Natural killer cell (primary cell): ENCODE measurements at regions of chr14 and their contacts with region 1.

Region 1: GRCh38 chr14:20690848-20691523 is 2.4 kb downstream of the ANG start:
- DNase-seq: peak in 1 of 2 donors; percentile 87
- ATAC-seq: peak; percentile 91 to 100 (median 98)
- H3K4me3 ChIP-seq: no peak overlapping the region
- H3K4me3 Mint-ChIP-seq: no peak overlapping the region
- H3K27ac ChIP-seq: no peak overlapping the region
- H3K27ac Mint-ChIP-seq: no peak overlapping the region
- H3K4me1 ChIP-seq: no peaks in the 10 kb centered on the region
- H3K4me1 Mint-ChIP-seq: peaks cover 6% of the 10 kb centered on the region in 2 donors
- H3K27me3 ChIP-seq: no peaks in the 10 kb centered on the region
- H3K27me3 Mint-ChIP-seq: no peaks in the 10 kb centered on the region
- CTCF ChIP-seq: peak; percentile 83

Region 2: DNA sequence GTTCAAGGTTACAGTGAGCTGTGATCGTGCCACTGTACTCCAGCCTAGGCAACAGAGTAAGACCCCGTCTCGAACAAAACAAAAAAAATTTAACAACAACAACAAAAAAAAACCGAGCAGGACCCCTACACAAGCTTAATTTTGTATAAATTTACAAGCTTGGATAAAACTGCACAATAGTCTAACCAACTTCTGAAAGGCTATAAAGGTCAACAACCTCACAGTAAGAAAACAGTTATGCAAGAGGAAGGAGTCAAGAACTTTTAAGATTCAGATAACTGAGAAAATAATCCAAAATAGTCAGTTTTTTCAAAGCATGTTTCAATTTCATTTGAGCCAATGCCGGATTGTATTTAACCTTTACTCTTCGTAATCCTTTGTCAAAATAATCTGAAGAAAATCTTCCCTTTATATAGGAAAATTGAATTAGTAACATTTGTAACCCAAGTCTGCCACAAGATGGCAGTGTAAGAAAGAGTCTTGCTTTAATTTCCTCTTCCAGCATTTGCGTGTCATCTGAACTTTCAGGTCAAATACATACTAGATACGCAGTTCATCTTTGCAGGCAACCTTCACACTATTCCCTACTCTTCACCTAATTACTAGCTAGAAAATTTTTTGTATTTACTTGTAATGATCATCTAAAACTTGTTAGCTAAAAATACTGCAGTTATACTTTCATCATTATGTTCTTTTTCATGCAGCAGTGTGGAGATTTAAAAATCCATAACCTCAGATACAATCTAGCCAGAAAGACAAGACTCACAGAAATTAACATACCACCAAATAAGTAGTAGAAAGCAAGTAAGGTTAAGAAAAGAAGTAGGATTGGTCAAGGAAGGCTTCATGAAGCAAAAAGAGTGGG is 363.7 kb before region 1 on chr14:
- intact Hi-C with region 1: loop called (anchors 1 kb)
- DNase-seq: peak in 1 of 2 donors; percentile 85
- ATAC-seq: peak in 2 of 3 donors; percentile 70 to 75
- H3K4me3 ChIP-seq: no peak overlapping the region
- H3K4me3 Mint-ChIP-seq: no peak overlapping the region
- H3K27ac ChIP-seq: no peak overlapping the region
- H3K27ac Mint-ChIP-seq: peak overlapping the region in 1 of 2 donors; percentile 55
- H3K4me1 ChIP-seq: peaks cover under 1% of the 10 kb centered on the region
- H3K4me1 Mint-ChIP-seq: peaks cover 12 to 14% of the 10 kb centered on the region in 2 donors
- H3K27me3 ChIP-seq: no peaks in the 10 kb centered on the region
- H3K27me3 Mint-ChIP-seq: no peaks in the 10 kb centered on the region
- CTCF ChIP-seq: peak; percentile 81

Region 3: DNA sequence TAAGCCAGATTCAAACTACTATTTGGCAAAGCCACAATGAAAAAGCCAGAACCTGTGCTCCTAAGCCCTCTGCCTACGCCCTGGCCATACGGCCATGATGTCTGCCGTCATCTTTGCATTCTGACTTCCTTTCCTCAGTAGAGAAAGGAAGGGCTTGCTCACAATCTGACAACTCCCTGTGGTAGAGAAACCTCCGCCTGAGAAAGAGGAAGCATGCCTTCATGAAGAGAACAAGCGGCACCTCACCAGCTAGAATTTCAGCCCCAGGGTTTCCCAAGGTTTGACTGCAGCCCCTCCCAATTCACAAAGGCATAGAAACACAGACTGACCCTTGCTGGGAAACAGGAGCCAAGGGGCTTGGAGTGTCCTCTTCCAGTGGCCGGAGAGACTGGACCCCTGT is 303.4 kb before region 1 on chr14:
- intact Hi-C with region 1: no loop called
- DNase-seq: no peak
- ATAC-seq: no peak
- H3K4me3 ChIP-seq: no peak overlapping the region
- H3K4me3 Mint-ChIP-seq: no peak overlapping the region
- H3K27ac ChIP-seq: no peak overlapping the region
- H3K27ac Mint-ChIP-seq: no peak overlapping the region
- H3K4me1 ChIP-seq: no peaks in the 10 kb centered on the region
- H3K4me1 Mint-ChIP-seq: no peaks in the 10 kb centered on the region
- H3K27me3 ChIP-seq: no peaks in the 10 kb centered on the region
- H3K27me3 Mint-ChIP-seq: no peaks in the 10 kb centered on the region
- CTCF ChIP-seq: no peak

Region 4: GRCh38 chr14:20530771-20531571 is 160.0 kb before region 1 on chr14:
- intact Hi-C with region 1: loop called (anchors 1 kb)
- DNase-seq: peak; percentile 61 to 87
- ATAC-seq: peak; percentile 76 to 87 (median 82)
- H3K4me3 ChIP-seq: no peak overlapping the region
- H3K4me3 Mint-ChIP-seq: no peak overlapping the region
- H3K27ac ChIP-seq: no peak overlapping the region
- H3K27ac Mint-ChIP-seq: no peak overlapping the region
- H3K4me1 ChIP-seq: peaks cover 3% of the 10 kb centered on the region
- H3K4me1 Mint-ChIP-seq: peaks cover 9% of the 10 kb centered on the region in 2 donors
- H3K27me3 ChIP-seq: peaks cover 3% of the 10 kb centered on the region
- H3K27me3 Mint-ChIP-seq: peaks cover 10 to 26% of the 10 kb centered on the region in 2 donors
- CTCF ChIP-seq: peak; percentile 79

Region 5: DNA sequence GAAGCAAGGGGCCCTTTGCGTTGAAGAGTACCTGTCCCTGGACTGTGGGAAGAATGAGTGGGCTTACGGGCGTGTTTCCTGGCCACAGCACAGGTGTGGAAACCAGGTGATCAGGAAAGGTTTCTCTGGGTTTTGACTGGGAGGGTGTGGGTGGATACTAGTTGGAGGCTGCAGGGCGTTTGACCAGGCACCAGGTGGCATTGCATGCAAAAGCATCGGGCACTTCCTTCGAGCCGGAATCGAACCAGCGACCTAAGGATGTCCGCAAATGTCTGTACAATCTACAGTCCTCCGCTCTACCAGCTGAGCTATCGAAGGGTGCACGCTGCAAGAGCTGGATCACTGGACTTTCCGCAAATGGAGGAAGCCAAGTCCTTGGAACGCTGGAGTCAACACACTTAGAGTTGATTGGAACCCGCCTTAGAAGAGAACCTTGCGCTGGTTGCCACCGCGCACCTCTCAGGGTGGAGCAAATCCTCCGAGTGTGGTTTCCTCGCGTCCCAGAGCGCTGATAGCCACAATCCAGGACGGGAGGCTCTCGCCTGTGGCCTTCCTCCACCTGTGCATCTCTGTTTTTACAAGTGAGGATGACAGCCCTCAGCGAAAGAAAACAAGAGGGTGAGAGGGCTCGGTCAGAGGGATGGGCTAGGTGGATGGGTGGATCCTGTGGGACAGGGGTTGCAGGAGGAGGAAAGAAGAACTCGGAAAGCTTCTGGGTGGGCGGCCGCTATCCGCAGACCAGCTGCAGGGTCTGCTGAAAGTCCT is 27.8 kb before region 1 on chr14:
- intact Hi-C with region 1: loop called (anchors 1 kb)
- DNase-seq: peak; percentile 68 to 89
- ATAC-seq: peak; percentile 84 to 94 (median 90)
- H3K4me3 ChIP-seq: peak overlapping the region; percentile 35
- H3K4me3 Mint-ChIP-seq: peak overlapping the region; percentile 75
- H3K27ac ChIP-seq: no peak overlapping the region
- H3K27ac Mint-ChIP-seq: peak overlapping the region; percentile 74 to 79
- H3K4me1 ChIP-seq: peaks cover 26% of the 10 kb centered on the region
- H3K4me1 Mint-ChIP-seq: peaks cover 25 to 28% of the 10 kb centered on the region in 2 donors
- H3K27me3 ChIP-seq: peaks cover 7% of the 10 kb centered on the region
- H3K27me3 Mint-ChIP-seq: peaks cover 26 to 34% of the 10 kb centered on the region in 2 donors
- CTCF ChIP-seq: peak; percentile 45